Activated T-helper 2 cell treated with anti-CD3 and anti-CD28 coated beads, Interferon-gamma antibody, Interleukin-2, Interleukin-4, amounts not matched to agents 10 μg/mL and 5 μg/mL and 100 μg/mL, durations not matched to agents 14 hours and 24 hours and 36 hours (primary cell): ENCODE measurements at regions of chr7 and their contacts with region 1.

Region 1: DNA sequence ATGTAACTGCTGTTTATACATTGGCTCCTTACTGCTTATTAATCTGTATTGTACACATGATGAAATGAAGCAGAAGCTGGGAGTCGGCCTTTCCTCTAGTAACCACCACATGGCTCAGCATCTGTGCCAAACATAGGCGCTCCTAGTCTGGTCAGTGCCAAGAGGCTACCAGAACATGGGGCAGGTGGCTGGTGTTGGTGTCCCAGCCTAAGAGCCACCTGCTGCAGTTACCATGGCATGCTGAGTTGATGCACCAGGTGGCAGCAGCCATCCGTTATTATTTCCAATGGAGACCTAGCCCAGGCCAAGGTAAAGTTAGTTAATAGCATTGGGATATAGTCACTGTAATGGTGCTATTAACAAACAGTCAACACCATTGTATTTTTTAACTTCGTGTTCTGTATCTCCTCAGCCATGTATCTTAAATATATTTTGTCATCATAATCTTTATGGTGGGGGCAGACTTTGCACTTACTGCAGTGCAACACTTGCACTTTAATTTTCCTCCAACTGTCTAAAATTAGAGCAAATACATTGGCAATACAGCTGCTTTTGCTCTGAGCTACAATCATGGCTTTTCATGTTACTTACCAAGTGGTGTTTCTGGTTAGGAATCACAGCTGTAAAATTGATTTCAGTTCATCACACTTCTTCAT is 33.1 kb downstream of the HBP1 start:
- DNase-seq: no peak
- H3K4me3 Mint-ChIP-seq: no peak overlapping the region
- H3K27ac Mint-ChIP-seq: no peak overlapping the region
- H3K4me1 Mint-ChIP-seq: no peaks in the 10 kb centered on the region
- H3K27me3 Mint-ChIP-seq: no peaks in the 10 kb centered on the region

Region 2: DNA sequence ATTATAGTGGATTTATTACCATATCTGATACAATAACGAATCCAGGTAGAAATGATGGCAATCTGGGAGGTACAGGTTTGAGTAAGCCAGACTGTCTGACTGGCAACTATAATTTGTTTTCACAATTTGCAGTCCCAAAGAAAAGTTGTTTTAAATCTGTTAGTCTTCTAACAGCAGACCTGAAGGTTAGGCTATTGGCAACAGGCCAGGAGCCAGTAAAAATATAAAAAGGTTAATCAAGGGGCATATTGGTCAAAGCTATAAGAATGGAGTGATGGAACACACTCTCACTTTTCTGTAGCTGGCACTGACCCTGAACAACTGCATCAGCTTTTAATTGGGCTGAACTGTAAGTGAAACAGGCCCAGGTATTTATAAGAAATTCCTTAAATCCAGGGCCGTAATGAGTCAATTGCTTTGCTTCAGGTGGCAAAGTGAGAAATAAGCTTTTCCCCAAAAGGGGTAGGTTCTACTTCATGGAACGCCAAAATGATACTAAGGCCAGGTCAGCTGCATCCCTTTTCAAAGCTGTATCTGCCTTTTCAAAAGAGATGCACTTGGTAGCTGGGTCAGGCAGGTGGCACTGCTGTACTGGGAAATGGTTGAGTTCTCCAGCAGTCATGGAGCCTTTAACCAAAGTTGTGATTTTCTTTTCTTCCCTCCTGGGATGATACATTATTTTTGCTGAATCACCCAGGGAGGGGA is 261.0 kb after region 1 on chr7:
- intact Hi-C with region 1: no loop called
- DNase-seq: peak; percentile 22
- H3K4me3 Mint-ChIP-seq: no peak overlapping the region
- H3K27ac Mint-ChIP-seq: no peak overlapping the region
- H3K4me1 Mint-ChIP-seq: no peaks in the 10 kb centered on the region
- H3K27me3 Mint-ChIP-seq: no peaks in the 10 kb centered on the region

Region 3: GRCh38 chr7:107725151-107725740 is 523.3 kb after region 1 on chr7:
- intact Hi-C with region 1: loop called (anchors 2 kb)
- DNase-seq: peak; percentile 17
- H3K4me3 Mint-ChIP-seq: no peak overlapping the region
- H3K27ac Mint-ChIP-seq: no peak overlapping the region
- H3K4me1 Mint-ChIP-seq: no peaks in the 10 kb centered on the region
- H3K27me3 Mint-ChIP-seq: peaks cover 21% of the 10 kb centered on the region

Region 4: DNA sequence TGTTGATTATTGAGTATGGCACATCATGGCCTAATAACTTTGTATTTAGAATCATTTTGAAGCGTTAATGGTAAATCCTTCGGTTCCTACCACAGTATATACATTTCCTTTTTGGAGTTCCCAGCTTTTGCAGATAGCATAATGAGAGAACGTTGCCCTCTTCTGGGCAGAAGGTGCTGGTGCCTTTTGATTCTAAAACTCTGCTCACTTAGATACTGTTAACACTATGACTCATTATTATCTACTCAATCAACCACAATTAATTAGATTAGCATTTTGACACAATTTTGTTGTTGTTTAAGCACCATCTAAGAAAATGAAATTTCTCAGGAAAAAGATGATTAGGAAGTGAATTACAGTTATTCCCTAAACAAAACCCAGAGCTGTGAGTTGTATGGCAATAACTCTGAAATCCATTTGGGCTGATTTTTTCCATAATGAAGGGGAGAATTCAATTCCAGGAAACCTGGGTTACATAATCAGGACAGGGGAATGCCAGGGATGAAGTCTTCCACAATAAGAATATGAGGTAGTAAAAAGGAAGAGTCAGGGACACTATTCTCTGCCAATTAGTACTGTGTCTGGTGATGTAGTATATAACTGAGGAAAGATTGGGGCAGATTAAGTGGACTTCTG is 677.6 kb after region 1 on chr7:
- intact Hi-C with region 1: loop called (anchors 10 kb)
- DNase-seq: no peak
- H3K4me3 Mint-ChIP-seq: no peak overlapping the region
- H3K27ac Mint-ChIP-seq: no peak overlapping the region
- H3K4me1 Mint-ChIP-seq: peaks cover 27% of the 10 kb centered on the region
- H3K27me3 Mint-ChIP-seq: peaks cover 29% of the 10 kb centered on the region